Common myeloid progenitor, CD34-positive (primary cell): ENCODE measurements at regions of chr6 and their contacts with region 1.

Region 1: GRCh38 chr6:32838114-32838958 is at the start of gene TAP2:
- DNase-seq: peak; percentile 93 to 97 (median 96)
- H3K4me3 ChIP-seq: peak within 1 kb of the TSS; percentile 47 to 92 (median 76)
- H3K27ac ChIP-seq: peak within 1 kb of the TSS in 1 of 2 experiments; percentile 79
- H3K4me1 ChIP-seq: peaks cover 15 to 46% (median 32%) of the 10 kb centered on the region in 4 experiments
- H3K27me3 ChIP-seq: no peaks in the 10 kb centered on the region

Region 2: GRCh38 chr6:32597024-32597423 is 241.3 kb before region 1 on chr6:
- CTCF ChIA-PET with region 1: no interaction called
- POLR2A ChIA-PET with region 1: no interaction called
- DNase-seq: no peak
- H3K4me3 ChIP-seq: no peak overlapping the region
- H3K27ac ChIP-seq: no peak overlapping the region
- H3K4me1 ChIP-seq: peaks cover 0 to 8% (median 3%) of the 10 kb centered on the region in 4 experiments
- H3K27me3 ChIP-seq: no peaks in the 10 kb centered on the region

Region 3: DNA sequence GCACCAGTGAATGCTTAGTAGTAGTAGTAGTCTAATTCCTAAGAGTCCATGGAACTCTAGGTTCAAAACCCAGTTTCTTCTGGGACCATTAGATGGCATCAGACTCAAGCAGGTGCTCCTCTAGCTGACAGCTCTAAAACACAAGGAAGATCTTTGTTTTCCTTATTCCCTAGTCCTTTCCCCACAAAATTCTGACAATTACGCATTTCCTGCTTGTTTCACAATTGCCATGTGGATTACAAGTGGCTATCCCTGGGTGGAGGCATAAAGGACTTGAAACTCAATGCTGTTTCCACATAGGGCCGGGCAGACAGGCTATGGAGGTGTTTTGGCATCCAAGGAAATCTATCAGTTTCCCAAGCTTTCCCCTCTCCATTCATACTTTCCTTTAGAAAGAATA is 12.4 kb before region 1 on chr6:
- CTCF ChIA-PET with region 1: interaction called, 30 read pairs
- POLR2A ChIA-PET with region 1: interaction called, 3 read pairs
- DNase-seq: peak; percentile 22 to 36 (median 26)
- H3K4me3 ChIP-seq: no peak overlapping the region
- H3K27ac ChIP-seq: no peak overlapping the region
- H3K4me1 ChIP-seq: peaks cover 4 to 11% (median 8%) of the 10 kb centered on the region in 4 experiments
- H3K27me3 ChIP-seq: no peaks in the 10 kb centered on the region

Region 4: DNA sequence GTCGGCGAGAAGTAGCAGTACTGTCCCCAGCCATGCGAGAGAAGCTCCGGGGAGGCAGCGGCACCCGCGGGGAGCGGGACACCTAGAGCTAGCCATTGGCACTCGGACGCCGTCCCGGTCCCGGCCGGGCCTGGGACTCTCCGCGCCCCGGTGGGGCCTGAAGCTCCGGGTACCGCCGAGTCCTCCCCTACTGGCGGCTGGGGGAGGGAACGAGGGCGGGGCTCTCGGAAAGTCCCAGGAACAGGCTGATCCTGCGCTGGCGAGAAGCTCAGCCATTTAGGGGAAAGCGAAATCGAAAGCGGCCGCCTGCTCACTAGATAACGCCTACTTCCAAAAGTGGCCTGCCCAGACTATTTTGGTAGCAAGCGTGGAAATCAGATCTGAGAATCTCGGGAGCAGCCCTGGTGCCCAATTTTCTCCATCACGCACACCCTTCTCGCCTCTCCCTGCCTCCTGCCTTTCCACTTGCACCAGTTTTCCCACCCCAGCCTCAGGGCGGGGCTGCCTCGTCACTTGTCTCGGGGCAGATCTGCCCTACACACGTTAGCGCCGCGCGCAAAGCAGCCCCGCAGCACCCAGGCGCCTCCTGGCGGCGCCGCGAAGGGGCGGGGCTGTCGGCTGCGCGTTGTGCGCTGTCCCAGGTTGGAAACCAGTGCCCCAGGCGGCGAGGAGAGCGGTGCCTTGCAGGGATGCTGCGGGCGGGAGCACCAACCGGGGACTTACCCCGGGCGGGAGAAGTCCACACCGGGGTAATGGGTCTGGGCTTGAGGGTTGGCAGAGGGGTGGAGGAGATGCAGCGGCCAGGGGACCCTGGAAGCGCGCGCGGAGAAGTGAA is 15.4 kb after region 1 on chr6 and contains the starts of genes PSMB9 and TAP1:
- CTCF ChIA-PET with region 1: interaction called, 94 read pairs
- POLR2A ChIA-PET with region 1: interaction called, 16 read pairs
- DNase-seq: peak; percentile 94 to 98 (median 98)
- H3K4me3 ChIP-seq: peak within 1 kb of the TSS; percentile 88 to 97 (median 95)
- H3K27ac ChIP-seq: peak within 1 kb of the TSS; percentile 74 to 89
- H3K4me1 ChIP-seq: peaks cover 6 to 32% (median 28%) of the 10 kb centered on the region in 4 experiments
- H3K27me3 ChIP-seq: no peaks in the 10 kb centered on the region

Region 5: DNA sequence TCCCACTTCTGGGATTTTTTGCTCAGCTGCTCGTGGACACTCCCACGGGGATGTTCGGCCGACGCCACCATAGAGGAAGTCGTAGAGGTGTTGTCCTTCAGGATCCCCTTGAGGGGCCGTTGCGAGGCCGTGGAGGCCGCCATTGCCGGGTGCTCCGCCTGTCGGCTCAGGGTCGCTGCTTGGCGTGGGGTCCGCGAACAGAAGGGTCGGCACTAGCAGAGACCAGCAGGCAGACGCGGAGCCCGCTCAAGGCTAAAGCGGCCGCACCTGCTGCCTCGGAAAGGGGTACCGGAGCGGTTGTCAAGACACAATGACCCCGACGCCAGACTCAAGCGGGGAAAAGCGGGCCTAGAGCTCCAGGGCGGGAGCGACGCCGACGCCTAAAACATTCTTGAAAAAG is 41.4 kb after region 1 on chr6:
- CTCF ChIA-PET with region 1: interaction called, 10 read pairs
- POLR2A ChIA-PET with region 1: no interaction called
- DNase-seq: no peak
- H3K4me3 ChIP-seq: peak overlapping the region in 1 of 7 experiments; percentile 29
- H3K27ac ChIP-seq: no peak overlapping the region
- H3K4me1 ChIP-seq: peaks cover 0 to 1% (median 0%) of the 10 kb centered on the region in 4 experiments
- H3K27me3 ChIP-seq: peaks cover 2 to 23% (median 2%) of the 10 kb centered on the region in 5 experiments

Region 6: GRCh38 chr6:33069021-33069738 is 230.8 kb after region 1 on chr6:
- CTCF ChIA-PET with region 1: no interaction called
- POLR2A ChIA-PET with region 1: no interaction called
- DNase-seq: no peak
- H3K4me3 ChIP-seq: no peak overlapping the region
- H3K27ac ChIP-seq: no peak overlapping the region
- H3K4me1 ChIP-seq: peaks cover 6 to 44% (median 27%) of the 10 kb centered on the region in 4 experiments
- H3K27me3 ChIP-seq: no peaks in the 10 kb centered on the region

Region 7: GRCh38 chr6:33161354-33162331 is 323.3 kb after region 1 on chr6:
- CTCF ChIA-PET with region 1: no interaction called
- POLR2A ChIA-PET with region 1: no interaction called
- DNase-seq: peak; percentile 61 to 74 (median 73)
- H3K4me3 ChIP-seq: peak overlapping the region; percentile 19 to 78 (median 57)
- H3K27ac ChIP-seq: no peak overlapping the region
- H3K4me1 ChIP-seq: peaks cover 0 to 20% (median 14%) of the 10 kb centered on the region in 4 experiments
- H3K27me3 ChIP-seq: peaks cover 0 to 5% (median 0%) of the 10 kb centered on the region in 5 experiments